SK-N-SH (cell line): ENCODE measurements at regions of chr16 and their contacts with region 1.

Region 1: GRCh38 chr16:81018496-81018895 is 11.5 kb downstream of the CENPN start:
- DNase-seq: no peak
- H3K4me3 ChIP-seq: no peak overlapping the region
- H3K27ac ChIP-seq: no peak overlapping the region
- H3K4me1 ChIP-seq: no peaks in the 10 kb centered on the region
- H3K27me3 ChIP-seq: no peaks in the 10 kb centered on the region
- CTCF ChIP-seq: no peak
- EP300 ChIP-seq: no peak
- RAD21 ChIP-seq: no peak

Region 2: GRCh38 chr16:79876332-79876730 is 1142.2 kb before region 1 on chr16:
- CTCF ChIA-PET with region 1: no interaction called
- POLR2A ChIA-PET with region 1: no interaction called
- DNase-seq: no peak
- H3K4me3 ChIP-seq: no peak overlapping the region
- H3K27ac ChIP-seq: no peak overlapping the region
- H3K4me1 ChIP-seq: no peaks in the 10 kb centered on the region
- H3K27me3 ChIP-seq: no peaks in the 10 kb centered on the region
- CTCF ChIP-seq: no peak
- EP300 ChIP-seq: no peak
- RAD21 ChIP-seq: no peak

Region 3: DNA sequence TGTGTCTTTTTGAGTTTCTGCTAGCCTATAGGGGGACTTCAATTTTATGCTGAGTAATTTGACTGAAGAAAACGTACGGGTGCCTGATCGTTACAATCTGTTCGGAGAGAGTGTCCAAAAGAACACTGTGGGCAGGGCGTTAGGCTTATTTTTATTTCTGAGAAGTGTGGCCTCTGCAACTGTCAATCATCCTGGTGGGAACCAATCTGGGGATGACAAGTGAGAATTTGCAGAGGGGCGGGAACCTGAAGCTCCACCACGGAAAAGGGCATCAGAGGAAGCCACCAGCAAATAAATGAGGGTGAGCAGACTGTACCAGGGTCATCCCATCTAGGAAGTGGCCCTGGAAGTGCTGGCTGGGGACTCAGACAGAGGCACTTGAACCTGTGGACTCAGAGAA is 202.1 kb before region 1 on chr16:
- CTCF ChIA-PET with region 1: no interaction called
- POLR2A ChIA-PET with region 1: no interaction called
- DNase-seq: no peak
- H3K4me3 ChIP-seq: no peak overlapping the region
- H3K27ac ChIP-seq: no peak overlapping the region
- H3K4me1 ChIP-seq: no peaks in the 10 kb centered on the region
- H3K27me3 ChIP-seq: no peaks in the 10 kb centered on the region; the same call in 1 of the 2 replicates
- CTCF ChIP-seq: no peak
- EP300 ChIP-seq: no peak
- RAD21 ChIP-seq: no peak

Region 4: DNA sequence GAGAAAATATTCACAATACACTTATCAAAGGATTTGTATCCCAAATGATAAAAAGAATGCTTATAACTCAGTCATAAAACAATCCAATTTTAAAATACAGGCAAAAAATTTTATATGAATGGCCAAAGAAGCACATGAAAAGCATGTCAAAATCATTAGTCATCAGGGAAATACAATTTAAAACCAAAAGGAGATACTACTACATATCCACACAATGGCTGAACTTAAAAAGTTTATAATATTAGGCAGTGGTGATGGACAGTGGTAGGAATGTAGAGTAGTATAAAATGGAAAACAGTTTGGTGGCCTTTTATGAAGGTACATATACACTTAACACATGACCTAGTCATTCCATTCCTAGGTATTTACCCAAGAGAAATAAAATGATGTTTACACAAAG is 24.0 kb before region 1 on chr16:
- CTCF ChIA-PET with region 1: no interaction called
- POLR2A ChIA-PET with region 1: no interaction called
- DNase-seq: no peak
- H3K4me3 ChIP-seq: no peak overlapping the region
- H3K27ac ChIP-seq: peak overlapping the region in 1 of 2 experiments; percentile 84; a peak in 2 of 4 replicates
- H3K4me1 ChIP-seq: peaks cover 0 to 17% of the 10 kb centered on the region in 2 experiments; a peak in 2 of 4 replicates
- H3K27me3 ChIP-seq: no peaks in the 10 kb centered on the region
- CTCF ChIP-seq: no peak
- EP300 ChIP-seq: no peak
- RAD21 ChIP-seq: no peak

Region 5: DNA sequence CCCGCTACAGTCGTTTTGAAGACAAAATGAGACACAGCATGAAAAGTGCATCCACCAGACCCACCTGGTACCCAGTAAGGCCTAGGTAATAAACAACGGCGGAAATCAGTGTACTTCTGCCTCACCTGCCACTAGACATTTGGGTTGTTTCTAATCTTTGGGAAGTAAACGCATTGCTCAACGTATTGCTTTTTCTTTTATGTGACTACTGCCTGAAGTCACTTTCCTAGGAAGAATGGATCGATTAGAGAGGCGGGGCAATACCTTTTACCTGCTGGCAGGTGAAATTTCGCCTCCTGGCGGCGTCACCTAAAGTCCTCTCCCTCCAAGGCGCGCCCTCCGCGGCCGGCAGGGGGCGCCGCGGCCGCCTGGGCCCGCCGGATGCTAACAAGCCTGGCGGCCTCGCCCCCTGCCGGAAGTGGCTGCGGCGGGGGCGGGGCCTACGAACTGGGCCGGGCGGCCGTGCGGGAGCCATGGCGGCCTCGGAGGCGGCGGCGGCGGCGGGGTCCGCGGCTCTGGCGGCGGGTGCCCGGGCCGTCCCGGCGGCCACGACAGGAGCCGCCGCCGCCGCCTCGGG is 17.0 kb after region 1 on chr16 and contains the start of gene ATMIN:
- CTCF ChIA-PET with region 1: interaction called, 22 read pairs
- POLR2A ChIA-PET with region 1: no interaction called
- DNase-seq: peak; percentile 98
- H3K4me3 ChIP-seq: peak within 1 kb of the TSS; percentile 67 to 86
- H3K27ac ChIP-seq: peak within 1 kb of the TSS in 1 of 2 experiments; percentile 65; a peak in 2 of 4 replicates
- H3K4me1 ChIP-seq: peaks cover 0 to 13% of the 10 kb centered on the region in 2 experiments; a peak in 2 of 4 replicates
- H3K27me3 ChIP-seq: no peaks in the 10 kb centered on the region
- CTCF ChIP-seq: peak; percentile 98
- EP300 ChIP-seq: no peak
- RAD21 ChIP-seq: peak; percentile 64
- polyA plus RNA-seq, gene ATMIN: 15.3 and 20.4 TPM in 2 replicates